ENCODE measurements at regions of chr19 and their contacts with region 1.

Region 1: DNA sequence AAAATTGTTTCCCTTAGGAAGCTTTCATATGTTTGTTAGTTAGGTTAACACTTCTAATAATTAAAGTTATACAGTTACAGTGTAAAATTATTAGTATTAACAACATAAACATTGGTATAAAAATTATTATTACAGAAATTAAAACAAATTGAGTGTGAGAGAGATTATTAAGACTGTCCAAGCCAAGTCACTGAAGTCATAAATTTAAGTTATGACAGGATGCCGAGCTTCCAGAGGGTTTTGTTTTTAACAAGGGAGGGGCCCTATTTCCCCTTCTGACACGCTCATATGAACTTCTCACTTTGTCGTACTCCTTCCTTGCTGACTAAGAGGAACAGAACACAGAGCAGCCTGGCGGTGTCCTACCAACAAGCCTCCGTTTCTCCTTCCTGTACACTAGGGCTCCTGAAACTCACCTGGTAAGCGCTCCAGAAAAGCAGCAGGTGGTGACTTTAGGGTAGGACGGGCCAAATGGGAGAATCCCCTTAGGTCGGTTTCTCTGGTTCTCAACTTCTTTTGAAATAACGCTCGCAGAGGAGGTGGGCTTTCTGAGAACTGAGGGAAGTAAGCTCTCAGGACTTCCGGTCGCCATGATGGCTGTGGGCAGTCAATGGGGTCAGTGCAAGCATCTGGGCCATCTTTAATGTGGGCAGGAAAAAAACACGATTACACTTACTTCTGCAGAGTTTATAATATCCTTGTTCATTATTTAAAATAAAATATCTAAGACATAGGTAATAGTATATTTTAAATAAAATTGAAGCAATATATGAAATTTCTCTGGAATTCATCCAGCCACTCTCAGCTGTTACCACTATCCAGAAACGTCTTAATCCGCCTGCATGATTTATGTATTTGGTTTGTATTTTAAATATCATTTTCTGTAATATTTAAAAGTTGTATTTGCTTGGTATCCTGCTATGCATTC is at the start of gene CARD8:
- DNase-seq: peak; percentile 68 to 88
- ATAC-seq: peak; percentile 90 to 96 (median 95)
- H3K4me3 ChIP-seq: peak within 1 kb of the TSS; percentile 44 to 71 (median 64)
- H3K27ac ChIP-seq: peak within 1 kb of the TSS; percentile 60 to 99 (median 94)
- H3K4me1 ChIP-seq: peaks cover 4 to 70% (median 43%) of the 10 kb centered on the region in 9 donors
- H3K27me3 ChIP-seq: no peaks in the 10 kb centered on the region
- CTCF ChIP-seq: no peak
- total RNA-seq, gene CARD8: 19.5 to 49.5 (median 29.4) TPM

Region 2: GRCh38 chr19:48102870-48103751 is 152.5 kb before region 1 on chr19:
- intact Hi-C with region 1: loop called in 3 of 10 experiments (anchors 5 to 10 kb)
- DNase-seq: no peak
- ATAC-seq: no peak
- H3K4me3 ChIP-seq: no peak overlapping the region
- H3K27ac ChIP-seq: no peak overlapping the region
- H3K4me1 ChIP-seq: peaks cover 0 to 12% (median 7%) of the 10 kb centered on the region in 9 donors
- H3K27me3 ChIP-seq: no peaks in the 10 kb centered on the region
- CTCF ChIP-seq: peak in 8 of 9 donors; percentile 5 to 67 (median 55)

Region 3: GRCh38 chr19:48110350-48110966 is 145.2 kb before region 1 on chr19 and contains the start of gene PLA2G4C:
- intact Hi-C with region 1: loop called in 3 of 10 experiments (anchors 5 to 10 kb)
- DNase-seq: peak; percentile 92 to 95
- ATAC-seq: peak; percentile 93 to 97 (median 96)
- H3K4me3 ChIP-seq: peak within 1 kb of the TSS; percentile 2 to 73 (median 55)
- H3K27ac ChIP-seq: peak within 1 kb of the TSS; percentile 82 to 98 (median 96)
- H3K4me1 ChIP-seq: peaks cover 0 to 40% (median 27%) of the 10 kb centered on the region in 9 donors
- H3K27me3 ChIP-seq: no peaks in the 10 kb centered on the region
- CTCF ChIP-seq: no peak
- total RNA-seq, gene PLA2G4C: 28.1 to 71.2 (median 46.3) TPM

Region 4: GRCh38 chr19:48170038-48170812 is 85.4 kb before region 1 on chr19 and contains the starts of genes LIG1 and ZSWIM9:
- intact Hi-C with region 1: loop called in 1 of 10 experiments (anchors 5 kb)
- DNase-seq: peak; percentile 91
- ATAC-seq: peak; percentile 97 to 99 (median 98)
- H3K4me3 ChIP-seq: peak within 1 kb of the TSS; percentile 62 to 98 (median 78)
- H3K27ac ChIP-seq: peak within 1 kb of the TSS; percentile 84 to 97 (median 96)
- H3K4me1 ChIP-seq: peaks cover 0 to 16% (median 11%) of the 10 kb centered on the region in 9 donors
- H3K27me3 ChIP-seq: no peaks in the 10 kb centered on the region
- CTCF ChIP-seq: peak in 7 of 9 donors; percentile 8 to 51 (median 21)
- total RNA-seq, gene LIG1: 1.8 to 8.5 (median 3.5) TPM
- total RNA-seq, gene ZSWIM9: 5.5 to 8.5 (median 6.6) TPM

Region 5: GRCh38 chr19:48190288-48190884 is 65.3 kb before region 1 on chr19:
- intact Hi-C with region 1: no loop called
- DNase-seq: no peak
- ATAC-seq: no peak
- H3K4me3 ChIP-seq: no peak overlapping the region
- H3K27ac ChIP-seq: no peak overlapping the region
- H3K4me1 ChIP-seq: no peaks in the 10 kb centered on the region
- H3K27me3 ChIP-seq: no peaks in the 10 kb centered on the region
- CTCF ChIP-seq: peak in 1 of 9 donors; percentile 11

Region 6: DNA sequence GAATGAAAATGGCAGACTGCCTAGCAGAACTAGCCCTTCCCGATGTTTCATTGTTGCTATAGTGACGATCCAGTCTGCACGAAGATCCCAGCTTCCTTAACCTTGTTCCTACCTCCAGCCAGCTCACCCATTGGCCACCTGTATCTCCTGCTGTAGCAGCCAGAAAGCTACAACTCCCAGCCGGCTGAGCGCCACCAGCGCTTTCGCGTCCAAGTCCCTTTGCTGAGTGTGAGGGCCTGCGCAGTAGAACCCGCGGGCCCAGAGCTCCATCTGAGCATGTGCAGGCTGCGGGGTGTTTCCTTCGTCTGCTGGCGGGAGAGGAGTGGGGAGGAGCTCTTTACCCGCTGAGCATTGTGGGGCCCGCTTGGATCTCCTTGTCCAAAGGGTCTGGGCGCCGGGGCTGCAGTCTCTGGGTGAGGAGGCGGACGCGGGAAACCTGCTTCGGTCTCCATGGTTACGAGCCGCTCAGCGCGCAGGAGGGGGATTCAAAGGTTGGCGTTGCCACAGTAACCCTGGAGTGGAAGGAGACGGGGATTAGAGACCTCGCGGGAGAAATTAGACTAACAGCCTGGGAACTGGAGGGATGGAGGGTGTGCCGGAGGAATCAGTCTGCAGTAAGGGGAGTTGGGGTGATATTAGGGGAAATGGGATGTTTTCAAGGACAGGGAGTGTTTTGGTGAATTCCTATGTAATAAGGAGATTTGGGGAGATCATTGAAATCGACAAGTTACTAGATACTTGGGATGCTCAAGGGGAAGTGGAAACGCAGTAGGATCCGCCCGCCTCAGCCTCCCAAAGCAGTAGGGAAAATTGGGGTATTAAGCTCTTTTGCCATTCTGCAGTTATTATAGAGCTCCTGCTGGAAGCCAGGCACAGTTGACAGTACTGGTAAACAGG is 51.7 kb before region 1 on chr19:
- intact Hi-C with region 1: loop called in 4 of 10 experiments (anchors 5 to 10 kb)
- DNase-seq: peak; percentile 92 to 95
- ATAC-seq: peak; percentile 99 to 100 (median 100)
- H3K4me3 ChIP-seq: peak overlapping the region; percentile 52 to 83 (median 68)
- H3K27ac ChIP-seq: peak overlapping the region in 9 of 10 donors; percentile 49 to 81 (median 72)
- H3K4me1 ChIP-seq: peaks cover 0 to 32% (median 8%) of the 10 kb centered on the region in 9 donors
- H3K27me3 ChIP-seq: no peaks in the 10 kb centered on the region
- CTCF ChIP-seq: no peak

Region 7: GRCh38 chr19:48221628-48222027 is 34.0 kb before region 1 on chr19:
- intact Hi-C with region 1: no loop called
- DNase-seq: no peak
- ATAC-seq: no peak
- H3K4me3 ChIP-seq: no peak overlapping the region
- H3K27ac ChIP-seq: no peak overlapping the region
- H3K4me1 ChIP-seq: no peaks in the 10 kb centered on the region
- H3K27me3 ChIP-seq: no peaks in the 10 kb centered on the region
- CTCF ChIP-seq: no peak

Region 8: DNA sequence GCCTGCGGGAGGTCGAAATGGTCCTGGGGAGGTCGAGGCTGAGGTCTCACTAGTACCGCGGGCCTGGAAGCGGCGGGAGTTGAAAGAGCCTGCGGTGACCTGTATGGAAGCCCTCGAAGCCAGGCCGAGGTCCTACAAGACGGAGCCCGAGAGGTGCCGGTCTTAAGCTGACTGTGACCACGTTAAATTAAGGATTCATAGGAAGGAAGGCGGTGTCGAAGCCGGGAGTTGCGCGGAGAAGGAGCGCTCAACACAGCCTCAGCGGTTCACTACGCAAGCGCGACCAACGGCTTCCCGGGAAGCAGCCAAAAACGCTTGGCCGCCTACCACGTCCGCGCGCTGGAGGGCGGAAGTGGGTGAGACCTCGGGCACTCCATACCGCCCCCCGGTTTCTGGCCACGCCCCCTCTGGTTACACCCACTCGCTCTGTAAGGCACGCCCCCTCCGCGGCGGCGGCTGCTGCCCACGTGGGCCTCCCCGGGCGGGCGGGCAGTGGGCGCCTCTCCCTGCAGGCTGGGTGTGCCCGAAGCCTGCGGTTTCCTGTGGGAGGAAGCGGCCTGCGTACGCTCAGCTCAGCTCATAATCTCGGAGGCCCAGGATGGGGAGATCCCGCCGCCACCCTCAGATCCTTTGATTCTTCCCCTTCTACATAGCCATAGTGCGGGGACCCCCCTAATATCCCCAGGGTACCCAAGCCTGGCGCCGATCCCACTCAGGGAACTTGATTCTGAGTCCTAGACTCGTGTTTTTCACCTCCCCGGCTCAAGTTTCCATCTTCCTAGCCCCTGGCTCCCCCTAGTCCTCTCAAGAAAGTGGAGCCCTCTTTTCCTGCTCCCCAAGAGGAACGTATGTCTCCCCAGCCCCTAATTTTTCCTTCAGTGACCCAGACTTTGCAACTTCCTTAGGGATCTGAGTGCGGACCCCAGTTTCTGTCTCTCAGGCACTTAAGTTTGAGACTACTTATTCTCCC is 66.3 kb after region 1 on chr19:
- intact Hi-C with region 1: loop called in 1 of 10 experiments (anchors 10 kb)
- DNase-seq: peak; percentile 98 to 100
- ATAC-seq: peak; percentile 90 to 94 (median 92)
- H3K4me3 ChIP-seq: peak overlapping the region; percentile 40 to 68 (median 60)
- H3K27ac ChIP-seq: peak overlapping the region; percentile 90 to 100 (median 98)
- H3K4me1 ChIP-seq: peaks cover 4 to 65% (median 48%) of the 10 kb centered on the region in 9 donors
- H3K27me3 ChIP-seq: no peaks in the 10 kb centered on the region
- CTCF ChIP-seq: peak in 4 of 9 donors; percentile 14 to 33 (median 25)

Region 9: GRCh38 chr19:48492925-48493717 is 237.5 kb after region 1 on chr19:
- intact Hi-C with region 1: loop called in 1 of 10 experiments (anchors 10 kb)
- DNase-seq: peak; percentile 95
- ATAC-seq: peak; percentile 86 to 94 (median 89)
- H3K4me3 ChIP-seq: peak overlapping the region in 9 of 10 donors; percentile 25 to 62 (median 57)
- H3K27ac ChIP-seq: peak overlapping the region in 9 of 10 donors; percentile 25 to 83 (median 67)
- H3K4me1 ChIP-seq: peaks cover 2 to 52% (median 30%) of the 10 kb centered on the region in 9 donors
- H3K27me3 ChIP-seq: peaks cover 0 to 62% (median 18%) of the 10 kb centered on the region in 7 donors
- CTCF ChIP-seq: no peak